ENCODE measurements at regions of chr17 and their contacts with region 1.

Region 1: GRCh38 chr17:60135151-60135950 is 14.4 kb upstream of the CA4 start:
- DNase-seq: peak; percentile 91 to 95
- H3K4me3 ChIP-seq: peak overlapping the region; percentile 59 to 80 (median 70)
- H3K27ac ChIP-seq: peak overlapping the region; percentile 72 to 85 (median 77)
- H3K4me1 ChIP-seq: peaks cover 18 to 44% (median 32%) of the 10 kb centered on the region in 4 donors
- H3K27me3 ChIP-seq: peaks cover 5 to 34% (median 21%) of the 10 kb centered on the region in 3 donors
- CTCF ChIP-seq: no peak
- EP300 ChIP-seq: no peak
- POLR2A ChIP-seq: no peak

Region 2: DNA sequence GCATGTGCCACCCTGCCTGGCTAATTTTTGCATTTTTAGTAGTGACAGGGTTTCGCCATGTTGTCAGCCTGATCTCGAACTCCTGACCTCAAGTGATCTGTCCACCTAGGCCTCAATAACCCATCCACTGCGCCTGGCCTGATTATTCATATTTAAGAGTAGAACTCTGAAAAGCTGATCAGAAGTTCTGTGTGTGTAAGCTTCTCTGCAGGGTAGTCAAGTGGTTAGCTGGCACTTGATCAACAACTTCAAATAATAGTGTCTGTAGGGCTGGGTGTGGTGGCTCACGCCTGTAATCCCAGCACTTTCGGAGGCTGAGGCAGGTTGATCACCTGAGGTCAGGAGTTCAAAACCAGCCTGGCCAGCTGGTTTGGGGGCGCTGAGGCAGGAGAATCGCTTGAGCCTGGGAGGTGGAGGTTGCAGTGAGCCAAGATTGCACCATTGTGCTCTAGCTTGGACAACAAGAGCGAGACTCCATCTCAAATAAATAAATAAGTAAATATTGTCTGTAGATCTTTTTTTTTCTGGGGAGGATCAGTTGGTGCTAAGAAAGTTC is 216.3 kb before region 1 on chr17:
- intact Hi-C with region 1: no loop called
- DNase-seq: no peak
- H3K4me3 ChIP-seq: no peak overlapping the region
- H3K27ac ChIP-seq: no peak overlapping the region
- H3K4me1 ChIP-seq: peaks cover 0 to 4% (median under 1%) of the 10 kb centered on the region in 4 donors
- H3K27me3 ChIP-seq: no peaks in the 10 kb centered on the region
- CTCF ChIP-seq: no peak
- EP300 ChIP-seq: no peak
- POLR2A ChIP-seq: no peak

Region 3: GRCh38 chr17:60435244-60436167 is 300.2 kb after region 1 on chr17:
- intact Hi-C with region 1: loop called (anchors 10 kb)
- DNase-seq: peak; percentile 69 to 93
- H3K4me3 ChIP-seq: no peak overlapping the region
- H3K27ac ChIP-seq: peak overlapping the region in 1 of 5 donors; percentile 57
- H3K4me1 ChIP-seq: peaks cover 0 to 9% (median 5%) of the 10 kb centered on the region in 4 donors
- H3K27me3 ChIP-seq: no peaks in the 10 kb centered on the region
- CTCF ChIP-seq: peak in 5 of 7 experiments; percentile 80 to 93 (median 91)
- EP300 ChIP-seq: no peak
- POLR2A ChIP-seq: no peak

Region 4: DNA sequence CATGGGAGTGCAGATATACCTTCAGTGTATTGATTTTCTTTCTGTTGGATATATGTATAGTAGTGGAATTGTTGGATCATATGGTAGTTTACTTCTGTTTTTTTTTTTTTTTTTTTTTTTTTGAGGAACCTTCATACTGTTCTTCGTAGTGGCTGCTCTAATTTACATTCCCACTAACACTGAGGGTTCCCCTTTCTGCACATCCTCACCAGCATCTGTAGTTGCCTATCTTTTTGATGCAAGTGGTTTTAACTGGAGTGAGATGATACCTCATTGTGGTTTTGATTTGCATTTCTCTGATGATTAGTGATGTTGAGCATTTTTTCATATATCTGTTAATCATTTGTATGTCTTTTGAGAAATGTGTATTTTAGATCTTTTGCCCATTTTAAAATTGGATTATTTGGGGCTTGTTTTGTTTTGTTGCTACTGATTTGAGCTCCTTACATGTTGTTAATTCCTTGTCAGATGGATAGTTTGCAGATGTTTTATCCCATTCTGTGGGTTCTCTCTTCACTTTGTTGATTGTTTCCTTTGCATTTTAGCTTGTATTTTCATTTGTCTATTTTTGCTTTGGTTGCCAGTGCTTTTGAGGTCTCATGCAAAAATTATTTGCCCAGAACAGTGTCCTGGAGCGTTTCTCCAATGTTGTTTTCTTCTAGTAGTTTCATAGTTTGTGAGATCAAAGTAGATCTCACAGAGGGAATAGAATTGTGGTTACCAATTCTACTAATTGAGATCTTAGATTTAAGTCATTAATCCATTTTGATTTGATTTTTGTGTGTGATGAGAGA is 517.3 kb after region 1 on chr17:
- intact Hi-C with region 1: no loop called
- DNase-seq: no peak
- H3K4me3 ChIP-seq: no peak overlapping the region
- H3K27ac ChIP-seq: no peak overlapping the region
- H3K4me1 ChIP-seq: no peaks in the 10 kb centered on the region
- H3K27me3 ChIP-seq: no peaks in the 10 kb centered on the region
- CTCF ChIP-seq: no peak
- EP300 ChIP-seq: no peak
- POLR2A ChIP-seq: no peak